SK-N-SH (cell line): ENCODE measurements at regions of chr6 and their contacts with region 1.

Region 1: DNA sequence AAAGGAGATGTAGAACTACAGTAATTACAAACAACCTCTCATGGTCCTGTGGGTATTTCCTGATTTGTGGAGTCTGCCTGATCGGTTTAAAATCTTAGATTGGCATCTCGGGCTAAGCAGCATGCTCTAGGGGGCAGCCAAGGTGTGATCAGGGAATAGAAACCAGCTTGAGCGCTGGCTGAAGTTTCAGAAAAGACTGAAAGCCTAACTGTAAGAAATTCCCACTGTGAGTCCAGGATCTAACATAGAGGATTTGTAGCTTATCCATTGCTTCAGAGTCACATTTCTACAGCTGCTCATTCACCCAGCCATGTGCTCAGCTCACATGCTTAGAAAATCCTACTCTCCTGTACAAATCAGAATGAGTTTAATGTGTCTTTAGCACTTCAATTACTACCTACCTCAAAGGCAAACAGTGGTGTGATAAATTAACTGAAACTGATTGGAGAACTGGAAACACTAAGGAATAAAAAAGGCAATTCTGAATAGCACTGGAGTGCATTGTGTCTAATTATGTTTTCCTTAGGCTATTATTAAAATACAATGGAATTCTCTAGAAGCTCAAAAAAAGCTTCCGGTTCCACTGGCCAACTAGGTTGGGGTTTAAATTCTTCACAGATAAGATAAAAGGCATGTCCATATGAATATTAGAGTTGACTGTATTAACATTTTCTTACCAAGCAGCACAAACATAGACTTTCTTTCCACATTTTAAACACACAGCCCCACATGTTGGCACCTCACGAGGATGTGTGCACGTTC is 73.8 kb upstream of the MPC1 start:
- DNase-seq: no peak
- H3K4me3 ChIP-seq: no peak overlapping the region
- H3K27ac ChIP-seq: peak overlapping the region in 1 of 2 experiments; percentile 23; a peak in 2 of 4 replicates
- H3K4me1 ChIP-seq: peaks cover 0 to 17% of the 10 kb centered on the region in 2 experiments; a peak in 1 of 4 replicates
- H3K27me3 ChIP-seq: no peaks in the 10 kb centered on the region
- CTCF ChIP-seq: peak; percentile 32
- EP300 ChIP-seq: no peak
- RAD21 ChIP-seq: peak; percentile 32; the same call in 1 of the 2 replicates

Region 2: DNA sequence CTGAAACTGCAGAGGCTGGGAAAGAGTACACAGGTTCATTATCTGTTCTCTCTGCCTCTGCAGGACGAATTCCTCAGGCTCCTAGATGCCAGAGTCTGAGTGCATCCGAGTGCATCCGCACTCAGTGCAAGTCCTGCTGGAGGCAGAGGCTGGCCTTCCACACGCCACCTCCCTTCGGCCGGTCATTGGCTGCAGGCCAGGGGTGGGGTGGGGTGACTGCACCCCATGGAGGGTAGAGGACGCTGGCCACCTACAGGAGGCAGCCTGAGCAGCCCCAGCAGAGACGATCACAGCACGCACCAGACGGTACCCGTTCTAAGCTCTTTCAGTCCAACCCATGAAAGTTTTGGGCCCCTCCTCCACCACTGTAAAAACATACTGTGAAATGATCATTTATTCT is 126.0 kb before region 1 on chr6:
- CTCF ChIA-PET with region 1: no interaction called
- POLR2A ChIA-PET with region 1: no interaction called
- DNase-seq: peak; percentile 94
- H3K4me3 ChIP-seq: 0 out of 4 replicates have a peak overlapping the region, but pooled peaks of 1 of the 2 experiments have one; percentile 26
- H3K27ac ChIP-seq: no peak overlapping the region; a peak in 1 of 4 replicates
- H3K4me1 ChIP-seq: peaks cover 0 to 8% of the 10 kb centered on the region in 2 experiments; a peak in 2 of 4 replicates
- H3K27me3 ChIP-seq: no peaks in the 10 kb centered on the region
- CTCF ChIP-seq: peak; percentile 38
- EP300 ChIP-seq: no peak
- RAD21 ChIP-seq: peak; percentile 42

Region 3: GRCh38 chr6:166360243-166361076 is 96.1 kb before region 1 on chr6:
- CTCF ChIA-PET with region 1: no interaction called
- POLR2A ChIA-PET with region 1: no interaction called
- DNase-seq: no peak
- H3K4me3 ChIP-seq: no peak overlapping the region
- H3K27ac ChIP-seq: no peak overlapping the region
- H3K4me1 ChIP-seq: peaks cover 2 to 9% of the 10 kb centered on the region in 2 experiments; a peak in 2 of 4 replicates
- H3K27me3 ChIP-seq: no peaks in the 10 kb centered on the region
- CTCF ChIP-seq: no peak
- EP300 ChIP-seq: no peak
- RAD21 ChIP-seq: no peak

Region 4: GRCh38 chr6:166444446-166444845 is 12.1 kb before region 1 on chr6:
- CTCF ChIA-PET with region 1: interaction called, 10 read pairs
- POLR2A ChIA-PET with region 1: no interaction called
- DNase-seq: no peak
- H3K4me3 ChIP-seq: no peak overlapping the region; a peak in 1 of 4 replicates
- H3K27ac ChIP-seq: peak overlapping the region in 1 of 2 experiments; percentile 43; a peak in 1 of 4 replicates
- H3K4me1 ChIP-seq: peaks cover 0 to 29% of the 10 kb centered on the region in 2 experiments; a peak in 2 of 4 replicates
- H3K27me3 ChIP-seq: no peaks in the 10 kb centered on the region
- CTCF ChIP-seq: no peak
- EP300 ChIP-seq: no peak
- RAD21 ChIP-seq: no peak

Region 5: DNA sequence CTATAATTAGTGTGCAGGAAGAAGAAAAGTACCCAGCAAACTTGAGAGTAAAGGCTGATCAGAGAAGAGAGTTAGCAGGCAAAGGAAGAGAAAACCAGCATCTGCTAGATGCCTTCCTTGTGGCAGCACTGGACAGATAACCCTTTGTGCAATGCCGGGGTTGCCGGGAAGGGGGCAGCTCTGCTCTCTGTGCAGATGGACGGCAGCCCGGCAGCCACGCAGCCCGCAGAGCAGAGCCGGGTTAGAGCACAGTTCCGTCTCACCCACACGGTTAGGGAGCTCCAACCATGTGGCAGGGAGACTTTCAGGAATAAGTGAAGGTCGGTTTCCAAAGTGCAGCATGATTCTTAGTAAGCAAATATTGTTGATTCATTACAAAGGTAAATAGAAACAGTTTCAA is 250.5 kb after region 1 on chr6:
- CTCF ChIA-PET with region 1: no interaction called
- POLR2A ChIA-PET with region 1: no interaction called
- DNase-seq: peak; percentile 45
- H3K4me3 ChIP-seq: no peak overlapping the region
- H3K27ac ChIP-seq: no peak overlapping the region
- H3K4me1 ChIP-seq: no peaks in the 10 kb centered on the region
- H3K27me3 ChIP-seq: no peaks in the 10 kb centered on the region; the same call in 1 of the 2 replicates
- CTCF ChIP-seq: 0 out of 2 replicates have a peak, but pooled peaks have one; percentile 15
- EP300 ChIP-seq: no peak
- RAD21 ChIP-seq: peak; percentile 32; the same call in 1 of the 2 replicates